Activated T-helper 2 cell treated with anti-CD3 and anti-CD28 coated beads, Interferon-gamma antibody, Interleukin-2, Interleukin-4, amounts not matched to agents 10 μg/mL and 5 μg/mL and 100 μg/mL, durations not matched to agents 14 hours and 24 hours and 36 hours (primary cell): ENCODE measurements at regions of chr17 and their contacts with region 1.

Region 1: GRCh38 chr17:81101614-81102306 is 63.5 kb upstream of the PVALEF start:
- DNase-seq: peak; percentile 85
- H3K4me3 Mint-ChIP-seq: no peak overlapping the region
- H3K27ac Mint-ChIP-seq: no peak overlapping the region
- H3K4me1 Mint-ChIP-seq: peaks cover 3% of the 10 kb centered on the region
- H3K27me3 Mint-ChIP-seq: no peaks in the 10 kb centered on the region

Region 2: DNA sequence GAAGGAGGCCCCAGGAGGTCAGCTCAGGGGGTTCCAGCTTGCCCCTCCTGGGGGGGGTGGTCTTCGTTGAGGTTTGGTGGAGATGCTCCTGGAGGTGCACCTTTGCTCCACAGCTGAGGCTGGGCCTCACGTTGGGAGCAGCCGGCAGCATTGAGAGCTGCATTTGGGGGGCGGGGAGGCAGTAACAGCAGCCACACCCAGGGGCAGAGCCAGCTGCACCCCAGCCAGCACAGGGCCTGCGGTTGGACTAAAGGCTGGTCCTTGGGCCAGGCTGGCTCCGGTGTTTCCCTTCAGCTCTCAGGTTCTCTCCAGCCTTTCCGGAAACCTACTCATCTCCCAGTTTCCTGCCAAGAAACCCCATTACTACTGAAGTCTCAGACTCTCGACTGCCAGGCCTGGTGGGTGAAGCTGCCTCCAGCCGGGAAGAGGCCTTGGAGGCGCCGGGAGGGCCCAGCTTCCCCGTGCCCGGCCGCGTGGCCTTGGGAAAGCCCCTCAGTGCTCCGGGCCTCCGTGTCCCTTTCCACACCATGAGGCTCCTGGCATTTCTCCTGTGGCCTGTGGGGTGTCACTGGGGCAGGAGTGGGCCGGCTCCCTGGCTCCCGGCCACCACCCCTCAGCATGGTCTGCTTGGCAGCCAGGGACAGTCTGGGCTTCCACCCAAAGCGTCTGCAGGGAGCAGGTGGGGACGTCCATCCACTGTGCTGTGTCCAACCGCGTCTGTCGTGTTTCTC is 80.8 kb before region 1 on chr17:
- intact Hi-C with region 1: loop called (anchors 1 kb)
- DNase-seq: no peak
- H3K4me3 Mint-ChIP-seq: no peak overlapping the region
- H3K27ac Mint-ChIP-seq: no peak overlapping the region
- H3K4me1 Mint-ChIP-seq: peaks cover 29% of the 10 kb centered on the region
- H3K27me3 Mint-ChIP-seq: no peaks in the 10 kb centered on the region